ENCODE measurements at regions of chr22 and their contacts with region 1.

Region 1: DNA sequence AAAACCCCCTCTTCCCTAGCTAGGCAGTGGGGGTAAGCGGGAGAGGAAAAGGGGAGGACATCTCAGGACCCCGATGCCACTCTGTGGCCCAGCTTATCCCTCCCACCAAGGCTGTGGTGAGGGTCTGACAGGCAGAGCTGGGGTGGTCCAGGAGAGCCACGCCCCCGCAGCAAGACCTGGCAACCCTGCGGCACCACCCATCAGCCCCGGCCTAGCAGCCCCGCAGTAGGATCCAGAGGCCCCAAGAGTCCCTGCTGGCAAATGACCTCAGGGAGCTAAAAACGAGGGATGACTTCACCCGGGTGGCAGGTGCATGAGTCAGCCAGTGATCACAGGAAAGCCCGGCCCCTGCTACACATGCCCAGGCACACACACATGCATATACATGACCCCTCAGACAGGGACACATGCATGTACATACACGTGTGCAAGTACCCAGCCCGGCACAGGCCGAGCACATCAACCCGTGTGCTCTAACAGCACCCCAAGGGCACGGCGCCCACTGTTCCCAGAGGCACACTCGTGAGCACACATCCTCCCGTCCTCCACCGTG is 32.3 kb downstream of the ARVCF start:
- DNase-seq: no peak
- H3K4me3 ChIP-seq: no peak overlapping the region
- H3K27me3 ChIP-seq: no peaks in the 10 kb centered on the region
- CTCF ChIP-seq: no peak

Region 2: DNA sequence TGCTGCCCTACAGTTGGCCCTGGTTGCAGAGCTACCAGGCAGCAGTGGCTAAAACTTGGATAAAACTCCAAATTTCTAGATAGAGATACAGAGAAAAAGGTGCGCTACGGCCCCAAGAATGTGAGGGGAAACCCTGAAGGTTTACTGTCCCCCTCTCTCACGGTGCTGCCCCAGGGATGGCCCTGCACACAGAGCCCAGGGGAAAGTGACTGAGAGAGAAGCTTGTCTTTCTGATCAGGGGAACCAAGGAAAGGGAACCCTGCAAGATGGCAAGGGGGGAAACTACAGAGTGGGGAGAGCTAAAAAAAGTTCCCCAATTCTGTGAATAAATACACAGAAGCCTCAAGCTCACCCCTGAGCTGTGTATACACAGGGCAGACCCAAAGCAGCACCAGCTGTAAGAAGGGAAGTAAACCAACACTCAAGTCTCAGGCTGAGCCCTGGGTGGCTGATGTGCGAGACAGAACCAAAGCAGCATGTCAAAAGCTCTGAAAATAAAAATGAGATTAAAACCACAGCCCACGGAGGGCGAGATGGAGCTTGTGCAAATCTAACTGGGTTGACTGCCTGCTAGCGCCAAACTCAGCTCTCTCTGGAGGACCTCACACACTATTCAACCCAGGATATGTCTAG is 151.7 kb before region 1 on chr22:
- CTCF ChIA-PET with region 1: no interaction called
- POLR2A ChIA-PET with region 1: no interaction called
- DNase-seq: no peak
- H3K4me3 ChIP-seq: no peak overlapping the region
- H3K27me3 ChIP-seq: no peaks in the 10 kb centered on the region
- CTCF ChIP-seq: no peak

Region 3: GRCh38 chr22:19970479-19971275 is 13.6 kb before region 1 on chr22:
- CTCF ChIA-PET with region 1: interaction called, 16 read pairs
- POLR2A ChIA-PET with region 1: no interaction called
- DNase-seq: no peak
- H3K4me3 ChIP-seq: no peak overlapping the region
- H3K27me3 ChIP-seq: no peaks in the 10 kb centered on the region
- CTCF ChIP-seq: peak; percentile 97

Measured in BJ (cell line).